Spleen (tissue), 13 donors: ENCODE measurements at regions of chr3 and their contacts with region 1.

Region 1: DNA sequence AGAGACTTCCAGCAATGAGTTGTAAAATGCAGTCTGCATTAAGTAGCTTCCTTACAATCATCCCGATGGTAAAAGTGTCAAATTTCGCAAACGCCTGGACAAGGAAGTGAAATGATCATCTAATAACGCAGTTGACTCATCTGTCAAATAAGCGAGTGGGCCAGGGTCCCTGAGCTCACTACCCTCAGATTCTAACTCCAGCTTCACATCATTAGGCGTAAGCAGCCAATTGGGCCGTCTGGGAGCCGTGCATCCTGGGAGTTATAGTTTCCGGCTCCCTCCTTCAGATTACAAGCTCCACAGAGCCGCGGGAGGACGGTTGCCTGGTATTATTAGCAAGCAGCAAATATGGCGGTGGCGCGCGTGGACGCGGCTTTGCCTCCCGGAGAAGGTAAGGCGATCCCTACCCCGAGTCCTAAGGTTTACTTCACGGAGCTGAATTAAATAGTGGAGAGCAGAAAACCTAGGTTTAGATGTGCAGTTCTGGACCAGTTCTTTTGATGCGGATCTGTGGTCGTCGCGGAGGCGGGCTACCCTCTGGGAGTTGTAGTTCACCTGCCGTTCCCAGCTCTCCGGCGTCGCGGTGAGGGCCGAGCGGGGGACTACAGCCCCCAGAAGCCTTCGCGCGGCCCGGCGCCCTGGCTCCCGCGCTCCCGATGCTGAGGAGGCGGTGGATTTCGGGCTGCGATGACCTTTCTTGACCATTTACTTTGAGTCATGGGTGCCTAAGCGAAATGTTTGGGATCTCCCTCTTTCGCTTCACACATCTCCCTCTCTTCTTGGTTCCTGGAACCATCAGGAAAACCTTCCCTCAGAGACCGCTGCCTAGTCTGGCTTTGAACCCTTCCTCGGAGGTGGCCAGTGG is at the start of gene CEP97:
- DNase-seq: peak; percentile 98
- H3K4me3 ChIP-seq: peak within 1 kb of the TSS; percentile 72 to 93 (median 89)
- H3K27ac ChIP-seq: peak within 1 kb of the TSS; percentile 74 to 92 (median 87)
- H3K4me1 ChIP-seq: peaks cover 12 to 66% (median 47%) of the 10 kb centered on the region in 6 donors
- H3K27me3 ChIP-seq: no peaks in the 10 kb centered on the region
- CTCF ChIP-seq: peak in 3 of 11 experiments; percentile 15 to 29 (median 20)
- POLR2A ChIP-seq: peak in 1 of 3 donors; percentile 10
- total RNA-seq, gene CEP97: 8.7 to 18.2 (median 10.0) TPM

Region 2: DNA sequence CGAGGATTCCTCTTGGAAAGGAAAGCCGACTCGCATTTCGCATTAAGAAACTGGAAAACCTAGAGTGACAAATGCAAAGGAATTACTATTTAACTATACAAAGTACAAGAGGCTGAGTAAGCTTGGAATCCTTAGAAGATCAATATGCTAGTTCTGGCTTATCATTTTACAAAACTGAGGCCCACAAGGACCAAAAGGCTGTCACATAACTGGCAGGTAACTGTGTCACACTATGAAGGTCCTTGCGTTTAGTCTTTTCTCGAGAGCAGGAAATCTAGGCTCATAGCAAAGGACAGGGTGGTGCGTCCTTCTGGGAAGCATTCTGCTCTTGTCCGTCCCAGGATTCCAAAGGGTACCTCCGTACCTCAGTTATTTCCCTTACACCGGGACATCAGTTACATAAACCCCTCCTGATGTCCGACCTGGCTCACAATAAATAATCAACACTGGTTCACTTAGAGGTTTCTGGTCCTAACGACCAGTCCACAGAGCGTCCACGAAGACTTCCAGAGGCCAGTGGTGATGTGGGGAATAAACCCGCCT is 38.6 kb before region 1 on chr3:
- intact Hi-C with region 1: loop called (anchors 5 kb)
- DNase-seq: no peak
- H3K4me3 ChIP-seq: peak overlapping the region; percentile 47 to 80 (median 60)
- H3K27ac ChIP-seq: peak overlapping the region; percentile 85 to 96 (median 93)
- H3K4me1 ChIP-seq: peaks cover 27 to 93% (median 58%) of the 10 kb centered on the region in 6 donors
- H3K27me3 ChIP-seq: no peaks in the 10 kb centered on the region
- CTCF ChIP-seq: no peak
- POLR2A ChIP-seq: no peak